ENCODE measurements at regions of chr7 and their contacts with region 1.

Region 1: GRCh38 chr7:126394406-126394805 is 858.3 kb downstream of the GRM8 start:
- DNase-seq: no peak
- H3K4me3 ChIP-seq: no peak overlapping the region
- CTCF ChIP-seq: no peak
- POLR2A ChIP-seq: no peak

Region 2: GRCh38 chr7:126016722-126017121 is 377.7 kb before region 1 on chr7:
- intact Hi-C with region 1: loop called (anchors 5 kb)
- DNase-seq: no peak
- H3K4me3 ChIP-seq: no peak overlapping the region
- CTCF ChIP-seq: no peak
- POLR2A ChIP-seq: no peak

Region 3: DNA sequence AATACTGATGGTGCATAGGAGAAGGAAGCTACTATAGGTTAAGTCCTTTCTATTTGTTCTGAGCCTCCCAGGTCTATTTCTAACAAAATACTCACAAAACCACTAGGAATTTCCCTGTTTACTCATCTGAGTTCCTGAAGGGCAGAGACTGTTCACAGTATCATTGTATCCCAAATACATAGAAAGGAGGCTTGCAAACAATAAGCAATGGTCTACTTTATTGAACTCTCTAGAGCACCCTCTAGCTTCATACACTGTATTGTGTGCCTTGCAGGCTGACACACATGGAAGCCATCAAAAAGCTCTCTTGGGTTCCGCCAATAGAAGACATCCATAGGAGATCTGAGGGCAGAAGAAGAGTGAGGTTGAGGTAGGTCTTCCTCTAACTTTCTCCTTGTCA is 32.2 kb after region 1 on chr7:
- intact Hi-C with region 1: no loop called
- DNase-seq: no peak
- H3K4me3 ChIP-seq: no peak overlapping the region
- CTCF ChIP-seq: no peak
- POLR2A ChIP-seq: no peak